Right lobe of liver (tissue), 6 donors: ENCODE measurements at regions of chrX and their contacts with region 1.

Region 1: GRCh38 chrX:54891573-54891972 is 29.1 kb upstream of the TRO start:
- DNase-seq: peak in 1 of 3 donors; percentile 46
- ATAC-seq: peak; percentile 76 to 90 (median 84)
- H3K4me3 ChIP-seq: no peak overlapping the region
- H3K27ac ChIP-seq: no peak overlapping the region
- H3K4me1 ChIP-seq: no peaks in the 10 kb centered on the region
- H3K27me3 ChIP-seq: no peaks in the 10 kb centered on the region
- CTCF ChIP-seq: peak; percentile 54 to 65 (median 58)
- POLR2A ChIP-seq: no peak

Region 2: GRCh38 chrX:54945224-54945623 is 53.7 kb after region 1 on chrX:
- intact Hi-C with region 1: no loop called
- DNase-seq: no peak
- ATAC-seq: no peak
- H3K4me3 ChIP-seq: no peak overlapping the region
- H3K27ac ChIP-seq: no peak overlapping the region
- H3K4me1 ChIP-seq: no peaks in the 10 kb centered on the region
- H3K27me3 ChIP-seq: no peaks in the 10 kb centered on the region
- CTCF ChIP-seq: no peak
- POLR2A ChIP-seq: no peak

Region 3: GRCh38 chrX:55057675-55058249 is 166.2 kb after region 1 on chrX:
- intact Hi-C with region 1: loop called in 1 of 2 experiments (anchors 10 kb)
- DNase-seq: no peak
- ATAC-seq: peak; percentile 77 to 93 (median 86)
- H3K4me3 ChIP-seq: no peak overlapping the region
- H3K27ac ChIP-seq: no peak overlapping the region
- H3K4me1 ChIP-seq: peaks cover 0 to 6% (median 0%) of the 10 kb centered on the region in 4 donors
- H3K27me3 ChIP-seq: no peaks in the 10 kb centered on the region
- CTCF ChIP-seq: peak; percentile 81 to 86 (median 84)
- POLR2A ChIP-seq: no peak